Activated naive CD4-positive, alpha-beta T cell treated with anti-CD3 and anti-CD28 coated beads for 36 hours (primary cell): ENCODE measurements at regions of chr3 and their contacts with region 1.

Region 1: GRCh38 chr3:114319453-114319852 is 25.6 kb downstream of the TIGIT start:
- DNase-seq: no peak
- H3K4me3 Mint-ChIP-seq: no peak overlapping the region
- H3K27ac Mint-ChIP-seq: no peak overlapping the region
- H3K4me1 Mint-ChIP-seq: peaks cover 36% of the 10 kb centered on the region
- H3K27me3 Mint-ChIP-seq: no peaks in the 10 kb centered on the region

Region 2: DNA sequence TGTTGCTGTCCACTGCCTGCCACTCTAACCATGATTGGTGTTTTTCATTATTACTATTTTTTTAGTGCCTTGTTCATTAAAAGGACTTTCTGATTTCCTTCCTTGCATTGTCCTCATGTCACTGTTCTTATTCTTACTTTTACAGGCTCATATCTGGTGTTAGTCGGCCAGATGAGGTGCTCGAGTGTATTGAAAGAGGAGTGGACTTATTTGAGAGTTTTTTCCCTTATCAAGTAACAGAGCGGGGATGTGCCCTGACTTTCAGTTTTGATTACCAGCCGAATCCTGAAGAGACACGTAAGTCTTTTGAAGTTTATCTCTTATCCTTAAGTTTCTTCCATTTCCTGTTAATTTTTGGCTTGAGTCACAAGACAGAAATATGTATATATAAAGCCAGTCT is 239.7 kb before region 1 on chr3:
- CTCF ChIA-PET with region 1: no interaction called
- intact Hi-C with region 1: no loop called
- DNase-seq: no peak
- H3K4me3 Mint-ChIP-seq: no peak overlapping the region
- H3K27ac Mint-ChIP-seq: no peak overlapping the region
- H3K4me1 Mint-ChIP-seq: no peaks in the 10 kb centered on the region
- H3K27me3 Mint-ChIP-seq: no peaks in the 10 kb centered on the region

Region 3: DNA sequence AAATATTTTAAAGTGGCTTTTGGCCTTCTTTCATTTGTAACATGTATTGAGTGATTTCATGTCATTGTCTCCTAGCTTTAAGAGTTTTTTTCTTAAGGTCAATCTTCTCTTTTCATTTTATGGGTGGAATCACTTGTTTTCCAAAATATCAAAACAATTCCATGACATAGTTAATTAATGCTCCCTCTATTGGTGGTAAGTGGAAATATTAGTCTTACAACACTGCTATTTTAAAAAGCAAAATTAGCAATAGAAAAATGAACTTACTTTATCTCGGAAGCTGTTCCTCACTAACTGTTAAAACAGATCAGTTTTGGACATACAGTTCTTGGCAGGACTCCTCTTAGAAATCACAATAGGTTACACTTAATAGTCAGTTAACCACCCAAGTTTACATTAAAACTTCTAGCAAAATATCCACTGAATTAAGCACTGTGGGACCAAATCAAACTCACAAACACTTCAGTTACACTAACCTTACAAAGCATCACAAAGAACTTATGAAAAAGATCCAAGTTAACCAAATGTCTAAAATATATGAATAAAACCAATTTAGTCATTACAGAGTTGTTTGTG is 16.8 kb after region 1 on chr3:
- CTCF ChIA-PET with region 1: interaction called, 10 read pairs
- intact Hi-C with region 1: loop called (anchors 1 kb)
- DNase-seq: no peak
- H3K4me3 Mint-ChIP-seq: no peak overlapping the region
- H3K27ac Mint-ChIP-seq: no peak overlapping the region
- H3K4me1 Mint-ChIP-seq: peaks cover 18% of the 10 kb centered on the region
- H3K27me3 Mint-ChIP-seq: no peaks in the 10 kb centered on the region

Region 4: GRCh38 chr3:114929971-114930732 is 610.7 kb after region 1 on chr3:
- CTCF ChIA-PET with region 1: no interaction called
- intact Hi-C with region 1: no loop called
- DNase-seq: no peak
- H3K4me3 Mint-ChIP-seq: no peak overlapping the region
- H3K27ac Mint-ChIP-seq: no peak overlapping the region
- H3K4me1 Mint-ChIP-seq: no peaks in the 10 kb centered on the region
- H3K27me3 Mint-ChIP-seq: no peaks in the 10 kb centered on the region

Region 5: DNA sequence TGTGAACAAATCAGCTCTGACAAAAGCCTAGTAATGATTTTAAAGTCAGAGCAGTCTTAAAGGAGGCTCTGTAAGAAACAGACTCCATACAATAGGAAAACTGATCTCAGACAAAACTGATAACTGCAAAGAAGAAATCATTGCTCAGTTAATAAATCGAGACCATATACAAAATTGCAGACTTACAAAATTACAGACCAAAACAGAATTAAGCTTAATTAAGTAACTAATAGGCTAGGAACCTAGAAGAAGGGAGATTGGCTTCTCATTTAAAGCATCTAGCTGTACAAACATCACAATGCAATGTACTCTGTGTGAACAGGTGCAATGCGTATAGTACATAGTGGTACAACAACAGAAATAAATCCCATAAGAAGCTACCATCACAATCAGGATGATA is 781.4 kb after region 1 on chr3:
- CTCF ChIA-PET with region 1: no interaction called
- intact Hi-C with region 1: no loop called
- DNase-seq: no peak
- H3K4me3 Mint-ChIP-seq: peak overlapping the region; percentile 83
- H3K27ac Mint-ChIP-seq: peak overlapping the region; percentile 85
- H3K4me1 Mint-ChIP-seq: peaks cover 46% of the 10 kb centered on the region
- H3K27me3 Mint-ChIP-seq: no peaks in the 10 kb centered on the region